ENCODE measurements at regions of chr5 and their contacts with region 1.

Region 1: DNA sequence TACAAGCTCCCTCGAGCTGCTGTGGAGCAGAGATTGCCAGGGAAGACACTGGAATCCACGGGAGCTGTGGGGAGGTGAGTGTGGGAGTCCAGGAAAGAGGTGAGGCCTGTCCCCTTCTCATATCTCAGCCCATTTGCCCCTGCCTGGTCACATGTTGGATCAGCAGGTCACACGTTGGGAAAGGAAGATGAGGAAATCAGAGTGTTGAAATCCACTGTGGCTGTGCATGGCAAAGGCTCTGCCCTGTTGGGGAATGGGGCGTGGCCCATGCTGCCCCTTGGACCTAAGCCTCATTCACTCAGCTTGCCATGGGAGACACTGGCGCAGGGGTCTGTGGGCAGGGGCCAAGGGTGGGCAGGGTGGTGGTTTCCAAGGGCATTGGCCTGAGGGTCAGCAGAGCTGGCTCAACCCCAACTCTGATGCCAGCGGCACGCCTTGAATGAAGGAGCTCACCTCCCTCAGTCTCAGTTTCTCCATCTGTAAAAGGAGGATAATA is 85.4 kb upstream of the CPEB4 start:
- H3K4me3 Mint-ChIP-seq: no peak overlapping the region
- H3K27ac Mint-ChIP-seq: no peak overlapping the region
- H3K4me1 Mint-ChIP-seq: peaks cover 37% of the 10 kb centered on the region
- H3K27me3 Mint-ChIP-seq: peaks cover 1% of the 10 kb centered on the region

Region 2: GRCh38 chr5:173315495-173316350 is 487.0 kb before region 1 on chr5:
- intact Hi-C with region 1: no loop called
- H3K4me3 Mint-ChIP-seq: no peak overlapping the region
- H3K27ac Mint-ChIP-seq: no peak overlapping the region
- H3K4me1 Mint-ChIP-seq: peaks cover 3% of the 10 kb centered on the region
- H3K27me3 Mint-ChIP-seq: peaks cover 62% of the 10 kb centered on the region

Region 3: DNA sequence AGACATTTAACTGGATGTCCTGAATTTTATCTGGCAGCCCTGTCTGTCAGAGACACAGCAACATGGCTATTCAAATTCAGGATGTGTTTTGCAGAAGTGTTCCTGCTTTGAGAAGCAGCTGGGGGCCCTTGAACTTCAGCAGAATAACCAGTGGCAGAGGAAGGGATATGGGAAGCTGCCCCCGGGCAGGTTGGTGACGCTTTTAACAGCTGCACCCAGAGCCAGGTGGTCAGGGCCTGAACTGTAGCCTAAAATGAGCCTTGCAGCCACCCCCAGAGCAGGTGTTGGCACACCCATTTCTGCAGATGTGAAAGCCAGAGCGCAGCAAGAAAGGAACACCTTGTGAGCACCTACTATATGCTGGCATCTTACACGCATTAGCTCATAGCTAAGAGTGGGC is 57.6 kb before region 1 on chr5:
- intact Hi-C with region 1: loop called (anchors 10 kb)
- H3K4me3 Mint-ChIP-seq: no peak overlapping the region
- H3K27ac Mint-ChIP-seq: peak overlapping the region; percentile 77
- H3K4me1 Mint-ChIP-seq: peaks cover 58% of the 10 kb centered on the region
- H3K27me3 Mint-ChIP-seq: no peaks in the 10 kb centered on the region

Region 4: GRCh38 chr5:173997331-173997730 is 194.6 kb after region 1 on chr5:
- intact Hi-C with region 1: no loop called
- H3K4me3 Mint-ChIP-seq: no peak overlapping the region
- H3K27ac Mint-ChIP-seq: no peak overlapping the region
- H3K4me1 Mint-ChIP-seq: no peaks in the 10 kb centered on the region
- H3K27me3 Mint-ChIP-seq: peaks cover 31% of the 10 kb centered on the region